Activated CD4-positive, alpha-beta T cell treated with anti-CD3 and anti-CD28 coated beads for 36 hours (primary cell): ENCODE measurements at regions of chr5 and their contacts with region 1.

Region 1: GRCh38 chr5:93532370-93532769 is 48.6 kb downstream of the NR2F1-AS1 start:
- DNase-seq: no peak
- ATAC-seq: no peak
- H3K4me3 Mint-ChIP-seq: no peak overlapping the region
- H3K27ac Mint-ChIP-seq: no peak overlapping the region
- H3K4me1 Mint-ChIP-seq: no peaks in the 10 kb centered on the region
- H3K27me3 Mint-ChIP-seq: peaks cover 4% of the 10 kb centered on the region

Region 2: DNA sequence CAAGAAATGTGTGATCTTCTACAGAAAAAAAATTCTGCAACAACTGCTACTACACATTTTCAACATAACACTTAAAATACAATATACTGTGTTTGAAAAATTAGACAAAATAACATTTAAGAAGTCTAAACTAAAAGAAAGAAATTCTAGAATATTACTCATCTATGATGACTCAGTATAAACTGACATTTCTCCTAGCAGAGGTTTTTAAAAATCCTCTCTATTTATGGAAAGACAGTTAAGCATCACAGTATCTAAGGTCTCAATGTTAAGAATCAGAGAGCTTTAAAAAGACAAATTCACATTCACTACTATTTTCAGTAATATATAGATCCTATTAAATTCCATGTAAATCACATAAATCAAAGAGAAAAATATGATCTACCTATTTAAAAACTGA is 12.6 kb before region 1 on chr5:
- CTCF ChIA-PET with region 1: interaction called, 3 read pairs
- POLR2A ChIA-PET with region 1: interaction called, 12 read pairs
- intact Hi-C with region 1: no loop called
- DNase-seq: no peak
- ATAC-seq: no peak
- H3K4me3 Mint-ChIP-seq: no peak overlapping the region
- H3K27ac Mint-ChIP-seq: no peak overlapping the region
- H3K4me1 Mint-ChIP-seq: no peaks in the 10 kb centered on the region
- H3K27me3 Mint-ChIP-seq: peaks cover 13% of the 10 kb centered on the region

Region 3: DNA sequence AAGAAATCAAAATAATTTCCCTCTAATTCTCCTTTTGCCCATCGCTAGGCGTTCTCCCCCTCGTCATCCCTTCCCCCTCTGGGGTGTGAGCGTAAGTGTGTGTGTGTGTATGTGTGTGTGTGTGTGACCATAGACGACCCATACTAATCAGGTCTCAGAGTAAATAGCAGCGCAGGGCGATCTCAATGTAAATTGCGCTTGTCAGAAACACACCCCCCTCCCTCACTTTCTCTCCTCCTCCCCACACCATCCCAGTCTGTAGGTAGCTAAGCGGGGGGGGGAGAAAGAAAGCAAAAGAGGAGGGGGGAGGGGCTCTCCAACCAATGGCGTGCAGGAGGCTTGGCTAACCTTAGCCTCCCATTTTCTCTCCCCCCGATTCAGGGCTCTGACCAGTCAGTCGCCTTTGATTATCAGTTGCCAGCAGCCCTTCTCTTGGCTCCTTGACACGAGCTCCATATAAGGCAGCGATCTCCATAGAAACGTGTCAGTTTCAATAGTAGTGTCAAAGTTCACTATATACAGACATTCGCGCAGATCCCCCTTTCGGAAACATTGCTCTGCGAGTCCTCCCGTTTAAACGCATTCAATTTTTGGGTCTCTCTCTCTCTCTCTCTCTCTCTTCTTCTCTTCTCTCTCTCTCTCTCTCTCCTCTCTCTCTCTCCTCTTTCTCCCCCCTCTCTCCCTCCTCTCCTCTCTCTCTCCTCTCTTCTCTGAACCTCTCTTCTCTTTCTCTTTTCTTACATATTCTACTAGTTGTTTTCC is 50.5 kb after region 1 on chr5 and contains the start of gene NR2F1:
- CTCF ChIA-PET with region 1: no interaction called
- POLR2A ChIA-PET with region 1: no interaction called
- intact Hi-C with region 1: no loop called
- DNase-seq: peak; percentile 18
- ATAC-seq: no peak
- H3K4me3 Mint-ChIP-seq: no peak within 1 kb of the TSS
- H3K27ac Mint-ChIP-seq: no peak within 1 kb of the TSS
- H3K4me1 Mint-ChIP-seq: peaks cover 28% of the 10 kb centered on the region
- H3K27me3 Mint-ChIP-seq: peaks cover 39% of the 10 kb centered on the region
- total RNA-seq, gene NR2F1: not detected